Activated B cell treated with CpG ODN at 0.5 μM for 24 hours (primary cell): ENCODE measurements at regions of chr3 and their contacts with region 1.

Region 1: GRCh38 chr3:172511783-172512762 is 11.2 kb downstream of the TNFSF10 start:
- DNase-seq: no peak
- ATAC-seq: peak; percentile 79
- H3K4me3 Mint-ChIP-seq: peak overlapping the region; percentile 57
- H3K27ac Mint-ChIP-seq: peak overlapping the region; percentile 84
- H3K4me1 Mint-ChIP-seq: peaks cover 64% of the 10 kb centered on the region
- H3K27me3 Mint-ChIP-seq: no peaks in the 10 kb centered on the region
- CTCF ChIP-seq: no peak

Region 2: DNA sequence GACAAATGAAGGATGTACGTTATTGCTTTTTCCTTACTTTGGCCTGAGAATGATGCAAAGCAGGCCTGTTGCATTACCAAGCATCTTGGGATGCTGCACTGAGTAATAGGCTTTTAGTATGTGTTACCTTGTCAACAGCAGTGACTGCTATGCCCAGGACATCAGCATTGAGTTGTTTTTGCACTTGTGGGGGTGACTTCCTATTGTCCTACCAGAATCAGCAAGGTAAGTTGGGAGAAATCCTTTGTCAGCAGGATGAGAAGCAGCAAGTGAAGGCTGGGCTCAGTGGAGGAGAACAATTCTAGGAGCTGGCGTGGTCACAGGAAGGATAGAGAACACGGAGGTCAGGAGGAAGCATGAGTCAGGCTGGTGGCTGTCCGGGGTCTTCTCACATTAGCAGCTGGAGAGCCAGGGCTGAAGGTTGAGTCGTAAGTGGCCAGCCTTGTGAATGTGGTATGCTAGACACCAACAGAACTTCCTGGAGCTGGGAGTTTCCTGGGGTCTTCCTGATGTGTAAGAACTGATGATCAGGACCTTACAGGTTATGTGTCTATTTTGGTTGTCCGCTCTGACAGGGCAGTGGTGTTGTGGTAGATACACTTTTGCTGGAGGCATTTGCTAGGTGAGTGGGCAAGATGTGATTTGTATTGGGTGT is 330.0 kb before region 1 on chr3:
- CTCF ChIA-PET with region 1: no interaction called
- POLR2A ChIA-PET with region 1: no interaction called
- intact Hi-C with region 1: no loop called
- DNase-seq: no peak
- ATAC-seq: no peak
- H3K4me3 Mint-ChIP-seq: no peak overlapping the region
- H3K27ac Mint-ChIP-seq: no peak overlapping the region
- H3K4me1 Mint-ChIP-seq: no peaks in the 10 kb centered on the region
- H3K27me3 Mint-ChIP-seq: no peaks in the 10 kb centered on the region
- CTCF ChIP-seq: no peak

Region 3: GRCh38 chr3:172522871-172523818 is 11.1 kb after region 1 on chr3 and contains the start of gene TNFSF10:
- CTCF ChIA-PET with region 1: interaction called, 4 read pairs
- POLR2A ChIA-PET with region 1: interaction called, 21 read pairs
- intact Hi-C with region 1: loop called (anchors 1 kb)
- DNase-seq: peak; percentile 46
- ATAC-seq: peak; percentile 88
- H3K4me3 Mint-ChIP-seq: peak within 1 kb of the TSS; percentile 94
- H3K27ac Mint-ChIP-seq: peak within 1 kb of the TSS; percentile 93
- H3K4me1 Mint-ChIP-seq: peaks cover 51% of the 10 kb centered on the region
- H3K27me3 Mint-ChIP-seq: no peaks in the 10 kb centered on the region
- CTCF ChIP-seq: no peak
- total RNA-seq, gene TNFSF10: 7.2 and 7.4 TPM in 2 replicates

Region 4: GRCh38 chr3:172546628-172547214 is 34.6 kb after region 1 on chr3:
- CTCF ChIA-PET with region 1: no interaction called
- POLR2A ChIA-PET with region 1: interaction called, 3 read pairs
- intact Hi-C with region 1: loop called (anchors 5 kb)
- DNase-seq: no peak
- ATAC-seq: peak; percentile 37
- H3K4me3 Mint-ChIP-seq: peak overlapping the region; percentile 32
- H3K27ac Mint-ChIP-seq: peak overlapping the region; percentile 35
- H3K4me1 Mint-ChIP-seq: peaks cover 31% of the 10 kb centered on the region
- H3K27me3 Mint-ChIP-seq: no peaks in the 10 kb centered on the region
- CTCF ChIP-seq: no peak

Region 5: GRCh38 chr3:172710664-172711453 is 198.8 kb after region 1 on chr3 and contains the start of gene NCEH1:
- CTCF ChIA-PET with region 1: no interaction called
- POLR2A ChIA-PET with region 1: no interaction called
- intact Hi-C with region 1: loop called (anchors 1 kb)
- DNase-seq: peak; percentile 70
- ATAC-seq: peak; percentile 100
- H3K4me3 Mint-ChIP-seq: peak within 1 kb of the TSS; percentile 97
- H3K27ac Mint-ChIP-seq: peak within 1 kb of the TSS; percentile 83
- H3K4me1 Mint-ChIP-seq: peaks cover 22% of the 10 kb centered on the region
- H3K27me3 Mint-ChIP-seq: no peaks in the 10 kb centered on the region
- CTCF ChIP-seq: no peak
- total RNA-seq, gene NCEH1: 4.5 and 4.9 TPM in 2 replicates